AG04450 (cell line): ENCODE measurements at regions of chr14 and their contacts with region 1.

Region 1: DNA sequence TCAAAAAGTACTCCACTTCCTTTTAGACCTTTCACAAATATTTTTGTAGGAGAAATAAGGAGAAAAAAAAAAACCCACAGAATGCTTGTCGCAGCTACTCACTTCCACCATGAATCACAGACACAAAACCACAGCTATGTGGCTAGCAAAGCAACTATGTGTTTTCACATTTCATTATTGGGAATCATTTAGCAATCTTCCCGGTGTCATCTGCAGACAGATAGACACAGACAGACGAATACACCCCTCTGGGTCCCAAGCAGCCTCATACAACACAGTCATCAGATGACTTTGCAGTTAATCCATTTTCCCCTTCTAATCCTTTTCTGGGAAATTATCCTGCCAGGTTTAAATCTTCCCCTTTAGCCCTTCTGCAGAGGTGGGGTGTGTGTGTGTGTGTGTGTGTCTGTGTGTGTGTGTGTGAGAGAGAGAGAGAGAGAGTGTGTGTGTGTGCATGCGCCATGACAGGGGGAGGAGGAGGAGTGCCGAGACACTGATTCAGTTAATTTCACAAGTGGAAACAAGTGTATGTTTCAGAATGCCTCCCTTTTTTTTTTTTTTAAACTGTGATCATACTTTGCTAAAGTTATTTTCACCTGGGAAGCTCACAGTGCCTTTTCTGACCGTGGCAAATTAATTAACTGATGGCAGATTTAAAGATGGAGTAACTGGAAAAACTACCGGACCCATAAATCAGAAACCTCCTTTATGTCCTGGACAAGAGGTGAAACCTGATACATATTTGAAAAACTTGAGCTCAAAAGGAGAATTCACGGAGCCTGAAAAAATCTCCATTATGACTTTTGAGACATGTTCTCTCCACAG is 39.9 kb downstream of the LTBP2 start:
- DNase-seq: peak; percentile 97
- H3K4me3 ChIP-seq: peak overlapping the region; percentile 54
- H3K27ac ChIP-seq: peak overlapping the region; percentile 100
- H3K27me3 ChIP-seq: no peaks in the 10 kb centered on the region
- CTCF ChIP-seq: no peak

Region 2: DNA sequence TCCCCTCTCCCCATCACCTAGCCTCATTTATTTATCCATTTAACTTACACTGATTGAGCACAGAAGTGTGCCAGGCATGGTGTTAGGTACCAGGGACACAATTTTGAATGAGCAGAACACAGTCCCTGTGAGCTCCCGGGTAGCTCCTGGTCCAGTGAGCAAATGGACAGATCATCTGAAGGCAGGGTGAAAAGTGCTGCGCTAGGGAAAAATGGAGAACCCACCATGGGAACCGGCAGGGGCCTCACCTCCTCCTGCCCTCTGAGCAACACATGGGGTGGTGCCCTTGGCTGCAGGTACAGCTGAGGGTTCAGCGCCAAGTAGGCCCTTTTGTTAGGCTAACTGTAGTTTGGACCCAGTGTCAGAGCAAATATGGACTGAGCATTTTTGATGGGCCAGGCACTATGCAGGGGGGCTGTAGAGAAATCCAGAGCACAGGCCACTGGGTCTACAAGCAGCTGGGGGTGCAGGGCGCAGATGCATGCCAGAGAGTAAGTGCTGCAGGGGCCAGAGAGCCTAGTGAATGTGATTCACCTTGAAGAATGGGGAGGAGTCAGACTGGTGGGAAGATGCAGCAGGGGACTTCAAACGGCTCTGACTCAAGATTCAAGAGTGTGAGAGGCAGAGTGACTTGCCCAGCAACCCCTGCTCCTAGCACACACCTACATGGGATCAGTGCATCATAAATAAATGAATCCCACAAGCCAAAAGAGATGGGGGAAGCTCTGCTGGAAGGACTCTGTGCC is 11.7 kb after region 1 on chr14:
- CTCF ChIA-PET with region 1: interaction called, 3 read pairs
- POLR2A ChIA-PET with region 1: interaction called, 15 read pairs
- DNase-seq: peak; percentile 65
- H3K4me3 ChIP-seq: no peak overlapping the region
- H3K27ac ChIP-seq: peak overlapping the region; percentile 61
- H3K27me3 ChIP-seq: no peaks in the 10 kb centered on the region
- CTCF ChIP-seq: no peak

Region 3: DNA sequence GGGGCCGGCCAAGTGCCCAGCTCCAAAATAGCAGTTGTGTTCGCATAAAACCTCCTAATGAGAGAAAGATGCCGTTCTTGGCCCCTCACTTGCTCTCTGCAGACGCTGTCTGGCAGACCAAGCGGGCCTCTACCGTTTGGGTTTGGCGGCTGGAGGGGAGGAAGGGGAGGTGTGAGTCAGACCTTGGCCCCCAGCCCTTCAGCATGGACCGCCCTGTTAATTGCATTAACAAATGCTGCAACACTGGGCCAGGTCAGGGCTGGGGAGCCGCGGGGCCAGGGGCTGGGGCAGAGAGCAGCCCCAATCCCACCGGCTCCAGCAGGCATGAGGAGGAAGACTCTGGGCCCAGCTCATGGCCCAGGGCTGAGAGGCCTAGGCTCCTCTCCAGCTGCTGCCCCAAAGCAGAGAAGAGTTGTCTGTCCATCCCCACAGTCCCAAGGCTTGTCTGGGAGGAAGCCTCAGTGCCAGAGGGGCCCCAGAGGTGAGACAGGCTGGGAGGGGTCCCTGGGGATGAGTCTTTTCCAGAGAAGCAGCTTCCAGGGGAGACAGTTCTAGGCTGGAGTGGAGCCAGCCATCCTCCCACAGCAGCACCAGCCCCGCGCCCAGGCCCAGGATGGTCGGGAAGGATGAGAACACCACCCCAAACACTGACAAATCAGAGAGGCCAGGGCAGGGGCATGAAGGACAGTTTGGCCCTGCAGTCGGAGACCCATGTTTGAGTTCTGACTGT is 23.1 kb after region 1 on chr14:
- CTCF ChIA-PET with region 1: interaction called, 5 read pairs
- POLR2A ChIA-PET with region 1: interaction called, 19 read pairs
- DNase-seq: no peak
- H3K4me3 ChIP-seq: no peak overlapping the region
- H3K27ac ChIP-seq: peak overlapping the region; percentile 90
- H3K27me3 ChIP-seq: no peaks in the 10 kb centered on the region
- CTCF ChIP-seq: no peak

Region 4: DNA sequence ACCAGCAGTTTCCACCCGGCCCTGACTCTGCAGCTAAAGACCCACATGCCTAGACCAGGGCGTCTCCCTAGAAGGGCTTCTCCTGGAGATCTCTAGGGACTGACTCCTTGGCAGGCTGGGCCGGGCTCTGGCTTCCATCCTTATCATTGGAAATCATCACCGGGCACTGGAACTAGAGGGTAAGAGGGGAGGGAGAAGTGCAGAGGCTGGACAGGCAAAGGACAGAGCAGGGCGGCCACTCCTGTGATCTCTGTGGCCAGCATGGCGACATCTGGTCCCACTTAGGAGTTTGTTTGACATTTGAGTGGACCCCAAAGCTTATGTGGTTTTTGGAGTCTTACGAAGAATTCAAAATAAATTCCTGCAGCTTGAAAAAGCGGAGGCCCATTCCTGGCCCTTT is 32.8 kb after region 1 on chr14:
- CTCF ChIA-PET with region 1: interaction called, 10 read pairs
- POLR2A ChIA-PET with region 1: interaction called, 39 read pairs
- DNase-seq: no peak
- H3K4me3 ChIP-seq: no peak overlapping the region
- H3K27ac ChIP-seq: peak overlapping the region; percentile 57
- H3K27me3 ChIP-seq: no peaks in the 10 kb centered on the region
- CTCF ChIP-seq: no peak

Region 5: GRCh38 chr14:74612350-74613021 is 40.4 kb after region 1 on chr14:
- CTCF ChIA-PET with region 1: interaction called, 10 read pairs
- POLR2A ChIA-PET with region 1: interaction called, 22 read pairs
- DNase-seq: no peak
- H3K4me3 ChIP-seq: peak overlapping the region; percentile 75
- H3K27ac ChIP-seq: peak overlapping the region; percentile 47
- H3K27me3 ChIP-seq: no peaks in the 10 kb centered on the region
- CTCF ChIP-seq: peak; percentile 59

Region 6: GRCh38 chr14:74618078-74618952 is 46.2 kb after region 1 on chr14:
- CTCF ChIA-PET with region 1: no interaction called
- POLR2A ChIA-PET with region 1: interaction called, 22 read pairs
- DNase-seq: no peak
- H3K4me3 ChIP-seq: no peak overlapping the region
- H3K27ac ChIP-seq: peak overlapping the region; percentile 93
- H3K27me3 ChIP-seq: no peaks in the 10 kb centered on the region
- CTCF ChIP-seq: no peak

Region 7: DNA sequence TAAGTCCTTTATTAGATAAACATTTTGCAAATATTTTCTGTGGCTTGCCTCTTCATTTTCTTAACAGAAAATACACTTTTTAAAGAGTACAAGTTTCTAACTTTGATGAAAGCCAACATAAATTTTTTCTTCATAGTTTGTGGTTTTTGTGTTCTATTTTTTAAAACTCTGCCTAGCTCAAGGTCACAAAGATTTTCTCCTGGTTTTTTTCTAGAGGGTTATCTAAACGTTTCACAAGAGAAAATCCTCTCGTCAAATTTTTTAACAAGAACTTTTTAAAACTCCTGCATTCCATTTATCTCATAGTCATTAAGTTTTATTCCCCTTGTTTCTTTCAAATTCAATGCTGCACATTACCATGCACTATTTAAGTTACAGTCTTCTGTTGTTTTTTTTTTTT is 132.5 kb after region 1 on chr14:
- CTCF ChIA-PET with region 1: no interaction called
- POLR2A ChIA-PET with region 1: no interaction called
- DNase-seq: no peak
- H3K4me3 ChIP-seq: no peak overlapping the region
- H3K27ac ChIP-seq: no peak overlapping the region
- H3K27me3 ChIP-seq: no peaks in the 10 kb centered on the region
- CTCF ChIP-seq: no peak

Region 8: DNA sequence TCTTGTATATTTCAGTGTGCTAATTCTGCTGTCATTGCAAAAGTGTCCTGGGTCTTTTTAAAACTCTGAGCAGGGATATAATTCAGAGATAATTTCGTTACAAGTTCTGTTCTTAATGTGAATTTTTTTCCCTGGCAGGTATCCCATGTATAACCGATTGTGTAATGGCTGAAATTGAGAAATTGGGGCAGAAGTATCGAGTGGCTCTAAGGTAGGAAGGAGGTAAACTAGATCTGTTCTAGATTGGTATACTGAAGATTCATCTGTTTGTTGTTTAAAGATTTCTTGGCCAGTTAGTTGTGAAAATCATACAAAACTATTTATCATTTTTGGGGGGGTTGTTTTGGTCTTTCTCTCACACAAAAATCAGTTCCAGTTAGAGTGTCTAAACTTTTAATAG is 151.0 kb after region 1 on chr14:
- CTCF ChIA-PET with region 1: no interaction called
- POLR2A ChIA-PET with region 1: no interaction called
- DNase-seq: no peak
- H3K4me3 ChIP-seq: no peak overlapping the region
- H3K27ac ChIP-seq: no peak overlapping the region
- H3K27me3 ChIP-seq: no peaks in the 10 kb centered on the region
- CTCF ChIP-seq: no peak